HAP-1 (cell line): ENCODE measurements at regions of chr2 and their contacts with region 1.

Region 1: DNA sequence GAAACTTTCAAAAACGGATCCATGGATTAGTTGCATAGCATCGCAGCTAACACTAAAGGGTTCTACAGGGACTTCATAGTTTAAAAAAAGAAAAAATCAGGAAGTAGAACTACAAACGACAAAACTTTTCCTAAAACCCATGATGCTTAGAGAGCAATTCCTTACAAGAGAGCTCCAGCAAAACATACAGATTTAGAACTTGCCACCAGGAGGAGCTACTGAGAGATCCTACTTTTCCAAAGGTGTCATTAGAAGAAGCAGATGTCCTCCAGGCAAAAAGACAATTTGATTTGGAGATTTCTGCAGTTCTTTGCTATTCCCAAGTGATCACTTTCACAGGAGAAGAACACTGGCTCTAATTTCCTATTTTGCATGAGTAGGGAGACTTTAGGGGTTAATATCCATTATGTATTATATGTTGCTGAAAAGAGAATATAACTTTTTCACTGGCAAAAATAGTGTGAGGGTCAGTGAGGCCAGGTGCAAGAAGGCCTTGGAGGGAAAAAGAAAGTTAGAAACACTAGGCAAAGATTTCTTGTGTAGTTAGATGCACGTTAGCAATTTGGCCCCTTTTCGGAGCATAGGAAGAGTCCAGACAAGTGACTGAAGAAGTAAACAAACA is 436.2 kb downstream of the SUCLG1 start:
- DNase-seq: peak; percentile 50 to 69
- H3K4me3 ChIP-seq: no peak overlapping the region
- H3K4me1 ChIP-seq: no peaks in the 10 kb centered on the region
- H3K27me3 ChIP-seq: 0 out of 2 replicates have a peak, but pooled peaks cover 2% of the 10 kb centered on the region

Region 2: GRCh38 chr2:84297155-84297554 is 274.2 kb after region 1 on chr2:
- in situ Hi-C with region 1: loop called (anchors 10 kb)
- DNase-seq: peak; percentile 61 to 72
- H3K4me3 ChIP-seq: no peak overlapping the region
- H3K4me1 ChIP-seq: peaks cover 10% of the 10 kb centered on the region
- H3K27me3 ChIP-seq: no peaks in the 10 kb centered on the region